GM12878 (cell line): ENCODE measurements at regions of chr9 and their contacts with region 1.

Region 1: DNA sequence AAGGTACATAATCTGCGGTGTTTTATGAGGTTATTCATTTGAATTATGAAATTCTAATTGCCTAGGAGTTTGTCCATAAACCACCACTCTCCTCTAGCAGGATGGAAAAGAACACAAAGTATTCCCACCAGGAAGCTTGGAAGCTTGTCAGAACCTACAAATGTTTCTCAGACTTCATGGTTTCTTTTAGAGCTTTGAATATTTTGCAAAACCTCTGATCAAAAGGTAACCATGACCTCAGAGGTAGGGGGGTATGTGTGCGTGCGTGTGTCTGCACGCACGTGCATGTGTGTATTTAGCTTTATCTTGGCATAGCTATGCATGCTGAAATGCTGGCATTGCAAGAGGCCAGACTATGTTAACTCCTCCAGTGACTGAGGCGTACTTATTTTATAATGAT is 847.0 kb downstream of the TLE1 start:
- DNase-seq: no peak
- ATAC-seq: no peak
- H3K4me3 ChIP-seq: no peak overlapping the region
- H3K27ac ChIP-seq: no peak overlapping the region
- H3K4me1 ChIP-seq: no peaks in the 10 kb centered on the region
- H3K27me3 ChIP-seq: no peaks in the 10 kb centered on the region
- CTCF ChIP-seq: no peak
- EP300 ChIP-seq: no peak
- POLR2A ChIP-seq: no peak
- RAD21 ChIP-seq: no peak

Region 2: GRCh38 chr9:80792726-80793125 is 49.7 kb before region 1 on chr9:
- CTCF ChIA-PET with region 1: interaction called, 3 read pairs
- POLR2A ChIA-PET with region 1: interaction called, 8 read pairs
- RAD21 ChIA-PET with region 1: interaction called, 17 read pairs
- SMC1A ChIA-PET with region 1: interaction called, 17 read pairs
- in situ Hi-C with region 1: no loop called
- intact Hi-C with region 1: no loop called
- DNase-seq: no peak
- ATAC-seq: no peak
- H3K4me3 ChIP-seq: no peak overlapping the region
- H3K27ac ChIP-seq: no peak overlapping the region
- H3K4me1 ChIP-seq: no peaks in the 10 kb centered on the region
- H3K27me3 ChIP-seq: no peaks in the 10 kb centered on the region
- CTCF ChIP-seq: no peak
- EP300 ChIP-seq: no peak
- POLR2A ChIP-seq: no peak
- RAD21 ChIP-seq: no peak

Region 3: GRCh38 chr9:80797831-80798688 is 44.3 kb before region 1 on chr9:
- CTCF ChIA-PET with region 1: interaction called, 3 read pairs
- POLR2A ChIA-PET with region 1: no interaction called
- RAD21 ChIA-PET with region 1: interaction called, 17 read pairs
- SMC1A ChIA-PET with region 1: interaction called, 17 read pairs
- in situ Hi-C with region 1: no loop called
- intact Hi-C with region 1: no loop called
- DNase-seq: no peak
- ATAC-seq: no peak
- H3K4me3 ChIP-seq: no peak overlapping the region
- H3K27ac ChIP-seq: no peak overlapping the region
- H3K4me1 ChIP-seq: no peaks in the 10 kb centered on the region
- H3K27me3 ChIP-seq: no peaks in the 10 kb centered on the region
- CTCF ChIP-seq: no peak
- EP300 ChIP-seq: no peak
- POLR2A ChIP-seq: no peak
- RAD21 ChIP-seq: no peak

Region 4: GRCh38 chr9:81069923-81070322 is 227.5 kb after region 1 on chr9:
- CTCF ChIA-PET with region 1: no interaction called
- POLR2A ChIA-PET with region 1: no interaction called
- RAD21 ChIA-PET with region 1: no interaction called
- SMC1A ChIA-PET with region 1: no interaction called
- in situ Hi-C with region 1: no loop called
- intact Hi-C with region 1: no loop called
- DNase-seq: no peak
- ATAC-seq: no peak
- H3K4me3 ChIP-seq: no peak overlapping the region
- H3K27ac ChIP-seq: no peak overlapping the region
- H3K4me1 ChIP-seq: no peaks in the 10 kb centered on the region
- H3K27me3 ChIP-seq: no peaks in the 10 kb centered on the region
- CTCF ChIP-seq: no peak
- EP300 ChIP-seq: no peak
- POLR2A ChIP-seq: no peak
- RAD21 ChIP-seq: no peak